ENCODE measurements at regions of chr5 and their contacts with region 1.

Region 1: DNA sequence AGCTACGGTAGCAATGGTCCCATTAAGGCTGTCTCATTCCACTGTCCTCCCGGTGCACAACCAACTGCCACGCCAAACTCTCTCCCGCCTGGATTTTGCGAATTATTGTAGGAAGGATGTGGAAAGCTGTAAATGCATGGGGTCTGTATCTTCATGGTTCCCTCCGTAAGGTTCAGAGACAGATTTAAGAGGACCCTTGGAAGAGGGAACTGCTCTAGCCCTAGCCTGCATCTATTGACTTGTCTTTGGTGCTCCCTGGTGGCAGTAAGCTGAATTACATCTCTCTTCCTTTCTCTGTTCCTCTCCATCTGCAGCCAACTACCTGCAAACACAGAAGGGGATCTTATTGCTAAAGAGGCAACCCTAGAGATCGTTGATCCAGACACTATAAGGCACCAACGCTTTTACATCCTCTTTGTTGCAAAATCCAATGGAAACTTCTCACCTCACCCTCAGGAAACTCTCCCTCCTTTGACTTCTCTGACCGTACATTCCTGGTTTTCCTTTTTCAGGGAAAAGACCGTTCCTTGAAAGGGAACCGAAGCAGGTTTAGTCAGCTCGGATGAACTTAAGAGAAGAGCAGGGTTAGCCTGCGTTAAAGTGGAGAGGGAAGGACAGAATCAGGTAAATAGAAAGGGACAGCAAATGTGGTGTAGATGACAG is 11.9 kb downstream of the CAPSL start:
- DNase-seq: peak; percentile 63 to 78 (median 72)
- H3K4me3 ChIP-seq: no peak overlapping the region
- H3K4me3 Mint-ChIP-seq: peak overlapping the region in 6 of 8 donors; percentile 60 to 82 (median 76)
- H3K27ac ChIP-seq: no peak overlapping the region
- H3K27ac Mint-ChIP-seq: peak overlapping the region in 3 of 7 donors; percentile 1 to 80 (median 49)
- H3K4me1 ChIP-seq: peaks cover 20% of the 10 kb centered on the region
- H3K4me1 Mint-ChIP-seq: peaks cover 26 to 38% (median 34%) of the 10 kb centered on the region in 4 donors
- H3K27me3 ChIP-seq: no peaks in the 10 kb centered on the region
- H3K27me3 Mint-ChIP-seq: peaks cover 5 to 7% of the 10 kb centered on the region in 2 donors

Region 2: DNA sequence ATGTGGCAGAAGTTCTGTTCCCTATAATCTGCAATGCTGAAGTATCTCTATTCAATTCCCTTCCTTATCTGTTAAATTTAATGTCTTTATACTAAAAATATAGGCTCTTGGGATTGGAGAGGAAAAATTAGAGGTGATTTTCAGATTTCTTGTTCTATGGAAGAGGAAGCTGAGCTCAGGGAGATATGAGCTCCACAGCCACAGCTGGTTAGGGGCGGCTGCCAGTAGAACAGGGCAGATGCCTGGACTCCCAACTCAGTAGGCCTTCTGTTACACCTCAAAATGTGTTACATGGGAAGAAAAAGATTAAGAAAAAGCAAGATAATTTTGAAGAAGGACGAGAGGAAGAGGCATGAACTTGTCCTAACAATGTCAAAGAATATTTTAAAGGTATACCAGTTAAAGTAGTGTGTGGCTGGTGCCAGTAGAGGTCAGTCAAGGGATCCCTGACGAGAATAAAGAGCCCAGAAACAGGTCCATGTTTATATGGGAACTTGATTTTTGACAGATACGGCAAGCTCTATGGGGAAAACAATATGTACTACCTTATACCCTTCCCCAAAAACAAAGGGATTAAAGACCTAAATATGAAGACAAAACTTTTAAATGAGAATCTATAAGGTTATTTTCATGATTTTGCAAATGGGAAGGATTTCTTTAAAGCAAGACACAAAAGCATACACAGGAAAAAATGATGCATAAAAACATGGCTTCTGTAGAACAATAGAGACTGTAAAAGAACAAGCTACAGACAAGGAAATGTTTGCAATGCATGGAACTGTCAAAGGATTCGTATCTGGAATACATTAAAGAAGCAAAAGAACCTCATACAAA is 968.4 kb before region 1 on chr5:
- CTCF ChIA-PET with region 1: interaction called, 13 read pairs
- POLR2A ChIA-PET with region 1: no interaction called
- intact Hi-C with region 1: no loop called
- DNase-seq: peak in 2 of 5 donors; percentile 4 to 7
- H3K4me3 ChIP-seq: no peak overlapping the region
- H3K4me3 Mint-ChIP-seq: no peak overlapping the region
- H3K27ac ChIP-seq: no peak overlapping the region
- H3K27ac Mint-ChIP-seq: peak overlapping the region in 3 of 7 donors; percentile 30 to 59 (median 56)
- H3K4me1 ChIP-seq: no peaks in the 10 kb centered on the region
- H3K4me1 Mint-ChIP-seq: peaks cover 0 to 3% (median under 1%) of the 10 kb centered on the region in 4 donors
- H3K27me3 ChIP-seq: no peaks in the 10 kb centered on the region
- H3K27me3 Mint-ChIP-seq: no peaks in the 10 kb centered on the region

Region 3: DNA sequence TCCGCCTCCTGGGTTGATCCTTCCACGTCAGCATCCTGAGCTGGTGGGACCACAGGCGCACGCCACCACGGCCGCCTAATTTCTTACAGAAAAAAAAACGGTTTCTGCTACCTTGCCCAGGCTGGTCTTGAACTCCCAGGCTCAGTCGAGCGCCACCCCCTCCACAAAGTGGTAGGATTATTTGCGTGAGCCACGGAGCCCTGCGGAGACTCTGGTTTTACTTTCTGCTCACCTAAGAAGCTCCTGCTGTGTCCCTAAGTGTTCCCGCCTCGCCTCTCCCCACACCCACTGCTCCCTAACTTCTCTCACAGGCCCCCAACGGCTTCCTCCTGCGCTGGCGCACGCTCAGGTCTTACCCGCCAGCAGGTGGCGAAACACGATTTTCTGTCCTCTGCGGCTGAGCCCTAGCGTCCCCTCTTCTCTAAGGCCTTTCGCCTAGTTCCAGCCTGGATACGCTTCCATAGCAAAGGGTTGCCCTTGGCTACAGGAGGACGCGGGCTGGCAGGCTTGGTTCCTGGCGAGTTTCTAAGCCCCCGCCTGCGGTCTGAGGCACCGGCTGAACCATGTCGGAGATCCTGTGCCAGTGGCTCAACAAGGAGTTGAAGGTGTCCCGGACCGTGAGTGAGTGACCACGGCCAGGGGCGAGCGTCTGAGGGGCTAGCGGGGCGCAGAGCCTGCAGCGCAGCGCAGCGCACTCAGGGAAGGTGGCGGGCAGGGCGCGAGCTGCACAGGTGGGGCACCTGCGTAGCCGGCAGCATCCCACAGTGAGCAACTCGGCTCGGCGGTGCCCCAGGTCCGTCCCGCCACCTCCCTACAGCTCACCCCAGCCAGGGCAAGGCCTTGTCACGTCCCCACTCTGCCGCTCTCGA is 308.9 kb before region 1 on chr5 and contains the start of gene SPEF2:
- CTCF ChIA-PET with region 1: interaction called, 142 read pairs
- POLR2A ChIA-PET with region 1: interaction called, 8 read pairs
- intact Hi-C with region 1: loop called (anchors 1 kb)
- DNase-seq: peak; percentile 78 to 84 (median 81)
- H3K4me3 ChIP-seq: peak within 1 kb of the TSS; percentile 73 to 83
- H3K4me3 Mint-ChIP-seq: peak within 1 kb of the TSS; percentile 92 to 98 (median 95)
- H3K27ac ChIP-seq: peak within 1 kb of the TSS; percentile 57
- H3K27ac Mint-ChIP-seq: peak within 1 kb of the TSS; percentile 81 to 99 (median 96)
- H3K4me1 ChIP-seq: peaks cover 23% of the 10 kb centered on the region
- H3K4me1 Mint-ChIP-seq: peaks cover 19 to 41% (median 27%) of the 10 kb centered on the region in 4 donors
- H3K27me3 ChIP-seq: no peaks in the 10 kb centered on the region
- H3K27me3 Mint-ChIP-seq: no peaks in the 10 kb centered on the region
- total RNA-seq, gene SPEF2: 14.2 to 15.4 TPM

Region 4: DNA sequence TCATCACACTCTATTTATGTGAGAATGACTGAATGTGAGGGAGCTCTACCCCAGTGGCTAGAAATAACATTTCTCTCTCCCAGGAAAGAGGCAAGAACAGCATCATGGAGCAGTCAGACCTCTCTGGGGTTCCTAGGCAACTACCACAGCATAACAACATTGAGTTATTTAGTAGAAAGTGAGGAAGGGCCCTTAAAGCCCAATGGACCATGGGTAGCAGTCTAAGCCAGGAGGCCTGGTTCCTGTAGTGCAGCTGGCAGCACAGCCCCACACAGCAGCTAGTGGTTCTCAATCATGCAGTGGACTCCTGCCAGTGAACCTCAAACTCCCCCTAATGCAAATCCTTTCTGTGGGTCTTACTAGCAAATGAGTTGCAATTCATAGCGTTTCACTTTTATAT is 253.5 kb before region 1 on chr5:
- CTCF ChIA-PET with region 1: interaction called, 30 read pairs
- POLR2A ChIA-PET with region 1: interaction called, 3 read pairs
- intact Hi-C with region 1: no loop called
- DNase-seq: peak; percentile 32 to 63 (median 54)
- H3K4me3 ChIP-seq: no peak overlapping the region
- H3K4me3 Mint-ChIP-seq: peak overlapping the region in 7 of 8 donors; percentile 31 to 76 (median 47)
- H3K27ac ChIP-seq: peak overlapping the region; percentile 7
- H3K27ac Mint-ChIP-seq: peak overlapping the region; percentile 68 to 92 (median 86)
- H3K4me1 ChIP-seq: peaks cover 58% of the 10 kb centered on the region
- H3K4me1 Mint-ChIP-seq: peaks cover 43 to 68% (median 54%) of the 10 kb centered on the region in 4 donors
- H3K27me3 ChIP-seq: no peaks in the 10 kb centered on the region
- H3K27me3 Mint-ChIP-seq: no peaks in the 10 kb centered on the region

Region 5: DNA sequence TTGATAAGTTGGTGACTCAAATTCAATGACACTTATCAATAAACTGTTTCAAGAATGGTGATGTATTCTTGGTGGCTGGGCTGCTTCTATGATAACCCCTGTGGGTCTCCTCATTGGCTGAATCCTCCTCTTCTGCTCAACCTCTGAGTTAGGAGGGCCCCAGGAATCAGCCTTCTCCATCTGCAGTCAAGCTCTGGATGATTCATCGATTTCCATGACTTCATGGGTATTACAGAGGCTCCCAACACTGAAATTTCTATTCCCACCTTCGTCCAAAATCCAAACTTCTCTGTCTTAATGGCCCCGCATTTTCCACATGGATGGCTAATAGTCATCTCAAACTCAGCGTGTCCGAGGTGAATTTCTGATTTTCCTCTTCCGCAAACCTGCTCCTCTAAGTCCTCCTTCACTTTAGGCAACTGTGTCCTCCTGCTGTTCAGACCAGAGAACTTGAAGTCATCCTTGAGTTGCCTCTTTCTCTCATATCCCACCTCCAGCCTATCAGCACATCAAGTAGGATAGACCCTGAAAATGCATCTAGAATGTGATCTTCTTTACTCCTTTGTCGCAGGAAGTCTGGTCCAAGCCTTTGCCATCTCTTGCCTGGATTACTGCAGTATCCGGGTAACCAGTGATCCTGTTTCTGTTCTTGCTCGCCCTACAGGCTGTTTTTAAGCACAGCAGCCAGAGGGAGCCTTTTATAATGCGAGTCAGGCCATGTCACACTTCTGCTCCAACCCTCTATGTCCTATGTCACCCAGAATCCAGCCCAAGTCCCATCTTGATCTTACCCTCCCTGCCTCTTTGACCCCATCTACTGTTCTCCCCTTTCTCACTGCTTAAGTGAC is 111.2 kb before region 1 on chr5:
- CTCF ChIA-PET with region 1: interaction called, 16 read pairs
- POLR2A ChIA-PET with region 1: interaction called, 3 read pairs
- intact Hi-C with region 1: loop called (anchors 2 kb)
- DNase-seq: peak in 3 of 5 donors; percentile 51 to 55 (median 53)
- H3K4me3 ChIP-seq: peak overlapping the region in 1 of 2 donors; percentile 26
- H3K4me3 Mint-ChIP-seq: no peak overlapping the region
- H3K27ac ChIP-seq: peak overlapping the region; percentile 47
- H3K27ac Mint-ChIP-seq: no peak overlapping the region
- H3K4me1 ChIP-seq: peaks cover 97% of the 10 kb centered on the region
- H3K4me1 Mint-ChIP-seq: peaks cover 32 to 43% (median 36%) of the 10 kb centered on the region in 4 donors
- H3K27me3 ChIP-seq: no peaks in the 10 kb centered on the region
- H3K27me3 Mint-ChIP-seq: no peaks in the 10 kb centered on the region

Region 6: GRCh38 chr5:35863159-35863558 is 63.4 kb before region 1 on chr5:
- CTCF ChIA-PET with region 1: interaction called, 13 read pairs
- POLR2A ChIA-PET with region 1: interaction called, 23 read pairs
- intact Hi-C with region 1: loop called (anchors 2 kb)
- DNase-seq: peak in 2 of 5 donors; percentile 13 to 58
- H3K4me3 ChIP-seq: peak overlapping the region; percentile 82 to 85
- H3K4me3 Mint-ChIP-seq: peak overlapping the region; percentile 91 to 98 (median 96)
- H3K27ac ChIP-seq: peak overlapping the region; percentile 97
- H3K27ac Mint-ChIP-seq: peak overlapping the region; percentile 82 to 98 (median 95)
- H3K4me1 ChIP-seq: peaks cover 64% of the 10 kb centered on the region
- H3K4me1 Mint-ChIP-seq: peaks cover 43 to 81% (median 57%) of the 10 kb centered on the region in 4 donors
- H3K27me3 ChIP-seq: no peaks in the 10 kb centered on the region
- H3K27me3 Mint-ChIP-seq: no peaks in the 10 kb centered on the region

Measured in CD4-positive, alpha-beta memory T cell (primary cell).